ENCODE measurements at regions of chr13 and their contacts with region 1.

Region 1: DNA sequence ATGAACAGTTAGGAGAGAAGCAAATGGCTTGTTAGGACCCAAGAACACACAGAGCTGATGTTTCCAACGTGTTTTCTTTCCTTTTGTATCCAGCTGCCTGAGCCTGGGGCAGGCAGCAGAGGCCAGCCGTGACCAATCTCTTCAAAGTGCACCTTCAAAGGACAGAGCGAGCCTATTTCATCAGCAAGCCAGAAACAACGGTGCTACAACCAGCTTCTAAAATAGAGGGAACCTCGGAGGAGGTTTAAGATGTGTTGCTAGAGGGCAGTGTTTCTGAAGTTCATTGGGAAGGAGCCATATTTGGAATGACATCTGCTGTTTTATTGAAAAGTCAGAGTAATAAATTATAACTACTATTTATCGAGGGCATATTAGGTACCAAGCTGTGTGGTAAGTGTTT is 56.2 kb upstream of the RFC3 start:
- DNase-seq: no peak

Region 2: GRCh38 chr13:32092496-32092895 is 1669.2 kb before region 1 on chr13:
- intact Hi-C with region 1: loop called in 1 of 2 experiments (anchors 5 kb)
- DNase-seq: no peak

Region 3: GRCh38 chr13:33194820-33195692 is 566.7 kb before region 1 on chr13:
- intact Hi-C with region 1: no loop called
- DNase-seq: no peak

Region 4: GRCh38 chr13:33874873-33875272 is 113.1 kb after region 1 on chr13:
- intact Hi-C with region 1: no loop called
- DNase-seq: no peak

Measured in posterior vena cava (tissue), 2 donors.